Activated CD8-positive, alpha-beta memory T cell treated with anti-CD3 and anti-CD28 coated beads, Interleukin-2, amount 10 ng/mL, durations not matched to agents 7 days and 5 days (primary cell): ENCODE measurements at regions of chr19 and their contacts with region 1.

Region 1: DNA sequence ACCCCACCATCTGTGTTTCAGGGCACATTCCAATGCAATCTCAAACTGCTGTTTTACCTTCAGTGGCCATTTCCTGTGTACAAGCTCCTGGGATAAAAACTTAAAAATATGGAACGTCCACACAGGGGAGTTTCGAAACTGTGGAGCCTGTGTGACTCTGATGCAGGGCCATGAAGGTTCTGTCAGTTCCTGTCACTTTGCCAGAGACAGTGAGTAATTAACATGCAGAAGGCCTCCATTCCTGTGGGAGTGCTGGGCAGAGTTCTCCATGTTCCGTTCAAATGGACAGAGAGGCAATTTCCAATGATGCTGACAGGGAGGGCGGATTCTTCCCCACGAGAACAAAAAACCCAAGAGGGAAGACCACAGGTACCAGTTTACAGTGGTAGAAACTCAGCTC is 24.4 kb downstream of the WDR88 start:
- DNase-seq: no peak
- ATAC-seq: no peak
- H3K4me3 Mint-ChIP-seq: no peak overlapping the region
- H3K27ac Mint-ChIP-seq: no peak overlapping the region
- H3K4me1 Mint-ChIP-seq: peaks cover 34% of the 10 kb centered on the region
- H3K27me3 Mint-ChIP-seq: no peaks in the 10 kb centered on the region

Region 2: DNA sequence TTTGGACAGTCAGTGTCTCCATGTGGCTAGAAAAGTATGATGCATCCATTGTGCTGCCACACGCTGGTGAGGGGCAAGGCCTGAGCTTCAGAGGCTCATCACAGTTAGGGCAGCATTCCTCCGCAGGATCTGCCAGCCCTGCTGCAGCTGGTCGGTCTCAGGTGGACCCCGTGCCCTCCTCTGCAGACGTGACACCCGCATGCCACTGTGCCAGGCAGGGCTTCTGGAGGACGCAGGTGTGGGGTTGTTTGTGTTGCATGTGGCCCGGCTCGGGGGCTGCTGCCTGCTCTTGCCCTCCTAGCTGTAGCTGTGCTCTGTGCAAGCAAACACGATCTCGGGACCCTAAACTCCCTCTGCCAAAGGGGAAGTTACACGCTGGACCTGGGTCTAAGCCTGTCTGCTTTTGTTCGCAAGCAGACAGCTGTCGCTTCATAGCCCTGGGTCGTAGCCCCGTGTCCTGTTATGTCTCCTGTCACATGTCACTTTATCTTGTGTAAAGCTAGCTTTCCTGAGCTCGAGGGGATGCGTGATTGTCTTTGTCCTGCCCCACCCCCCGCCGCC is 332.1 kb before region 1 on chr19:
- CTCF ChIA-PET with region 1: no interaction called
- DNase-seq: no peak
- ATAC-seq: no peak
- H3K4me3 Mint-ChIP-seq: no peak overlapping the region
- H3K27ac Mint-ChIP-seq: no peak overlapping the region
- H3K4me1 Mint-ChIP-seq: peaks cover 8% of the 10 kb centered on the region
- H3K27me3 Mint-ChIP-seq: peaks cover 8% of the 10 kb centered on the region

Region 3: DNA sequence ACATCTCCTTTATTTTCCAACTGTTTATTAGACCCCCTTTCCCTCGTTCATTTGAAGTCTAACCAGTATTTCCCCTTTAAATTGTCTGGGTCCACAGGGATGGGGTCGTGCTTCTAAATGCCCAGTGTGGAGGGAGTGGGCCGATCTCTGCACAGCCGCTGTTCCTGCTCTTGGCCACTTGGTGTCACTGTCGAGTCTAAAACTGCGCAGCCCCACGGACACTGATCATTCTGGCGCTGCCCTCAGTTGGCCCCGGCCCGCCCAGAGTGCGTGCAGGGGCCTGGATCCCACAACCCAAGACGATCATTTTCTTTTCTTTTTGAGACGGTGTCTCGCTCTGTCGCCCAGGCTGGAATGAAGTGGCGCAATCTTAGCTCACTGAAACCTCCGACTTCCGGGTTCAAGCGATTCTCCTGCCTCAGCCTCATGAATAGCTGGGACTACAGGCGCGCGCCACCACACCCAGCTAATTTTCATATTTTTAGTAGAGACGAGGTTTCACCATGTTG is 12.4 kb before region 1 on chr19:
- CTCF ChIA-PET with region 1: interaction called, 20 read pairs
- DNase-seq: peak; percentile 72
- ATAC-seq: peak; percentile 98
- H3K4me3 Mint-ChIP-seq: no peak overlapping the region
- H3K27ac Mint-ChIP-seq: no peak overlapping the region
- H3K4me1 Mint-ChIP-seq: peaks cover 6% of the 10 kb centered on the region
- H3K27me3 Mint-ChIP-seq: peaks cover 7% of the 10 kb centered on the region